ENCODE measurements at regions of chr5 and their contacts with region 1.

Region 1: GRCh38 chr5:43120720-43121564 is at the start of gene ZNF131:
- DNase-seq: peak; percentile 95 to 99 (median 98)
- ATAC-seq: peak; percentile 93
- H3K4me3 ChIP-seq: peak within 1 kb of the TSS; percentile 70
- H3K4me3 Mint-ChIP-seq: peak within 1 kb of the TSS; percentile 89 to 98 (median 96)
- H3K27ac ChIP-seq: peak within 1 kb of the TSS; percentile 97
- H3K27ac Mint-ChIP-seq: peak within 1 kb of the TSS; percentile 86 to 99 (median 96)
- H3K4me1 ChIP-seq: peaks cover 27 to 30% of the 10 kb centered on the region in 2 donors
- H3K4me1 Mint-ChIP-seq: peaks cover 22 to 47% (median 44%) of the 10 kb centered on the region in 7 donors
- H3K27me3 ChIP-seq: no peaks in the 10 kb centered on the region
- H3K27me3 Mint-ChIP-seq: peaks cover 0 to 4% (median 0%) of the 10 kb centered on the region in 5 donors
- total RNA-seq, gene ZNF131: 47.2 to 83.4 (median 67.8) TPM

Region 2: DNA sequence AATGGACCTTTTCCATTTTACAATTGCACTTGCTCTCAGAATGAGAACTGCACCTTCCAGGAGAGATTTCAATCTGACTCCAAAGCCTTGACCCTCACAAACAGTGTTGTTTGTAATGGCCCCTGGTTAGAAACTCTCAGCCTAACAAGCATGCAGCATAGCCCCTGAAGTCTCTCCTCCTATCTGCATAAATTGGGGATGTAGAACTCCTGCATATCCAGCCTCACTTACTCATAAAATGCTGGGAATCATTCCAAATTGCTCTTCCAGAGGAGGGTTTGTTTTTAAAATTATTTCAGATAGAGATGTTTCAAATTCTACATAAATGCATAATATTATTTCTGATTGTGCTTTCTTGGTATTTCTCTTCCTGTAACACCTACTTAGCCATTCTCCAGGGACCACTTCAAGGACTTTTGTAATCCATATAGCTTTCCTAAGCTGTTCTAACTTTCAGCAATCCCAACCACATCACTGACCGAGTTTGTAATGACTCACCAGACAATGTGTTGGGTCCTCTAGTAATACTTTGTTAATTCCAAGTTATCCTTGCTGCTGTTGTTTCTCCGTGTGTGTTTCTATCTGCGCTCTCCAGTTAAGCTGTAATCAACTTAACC is 508.1 kb before region 1 on chr5:
- CTCF ChIA-PET with region 1: no interaction called
- POLR2A ChIA-PET with region 1: no interaction called
- intact Hi-C with region 1: no loop called
- DNase-seq: no peak
- ATAC-seq: no peak
- H3K4me3 ChIP-seq: no peak overlapping the region
- H3K4me3 Mint-ChIP-seq: no peak overlapping the region
- H3K27ac ChIP-seq: no peak overlapping the region
- H3K27ac Mint-ChIP-seq: no peak overlapping the region
- H3K4me1 ChIP-seq: no peaks in the 10 kb centered on the region
- H3K4me1 Mint-ChIP-seq: no peaks in the 10 kb centered on the region
- H3K27me3 ChIP-seq: peaks cover 0 to 3% of the 10 kb centered on the region in 2 donors
- H3K27me3 Mint-ChIP-seq: peaks cover 22 to 50% (median 29%) of the 10 kb centered on the region in 5 donors

Region 3: GRCh38 chr5:42908509-42909488 is 212.1 kb before region 1 on chr5:
- CTCF ChIA-PET with region 1: interaction called, 7 read pairs
- POLR2A ChIA-PET with region 1: interaction called, 25 read pairs
- intact Hi-C with region 1: loop called (anchors 1 to 2 kb)
- DNase-seq: peak; percentile 76 to 93 (median 88)
- ATAC-seq: peak; percentile 92
- H3K4me3 ChIP-seq: peak overlapping the region; percentile 72
- H3K4me3 Mint-ChIP-seq: peak overlapping the region; percentile 89 to 98 (median 94)
- H3K27ac ChIP-seq: peak overlapping the region; percentile 76
- H3K27ac Mint-ChIP-seq: peak overlapping the region; percentile 64 to 97 (median 95)
- H3K4me1 ChIP-seq: peaks cover 0 to 4% of the 10 kb centered on the region in 2 donors
- H3K4me1 Mint-ChIP-seq: peaks cover 5 to 22% (median 19%) of the 10 kb centered on the region in 7 donors
- H3K27me3 ChIP-seq: no peaks in the 10 kb centered on the region
- H3K27me3 Mint-ChIP-seq: peaks cover 0 to 43% (median 0%) of the 10 kb centered on the region in 5 donors

Region 4: DNA sequence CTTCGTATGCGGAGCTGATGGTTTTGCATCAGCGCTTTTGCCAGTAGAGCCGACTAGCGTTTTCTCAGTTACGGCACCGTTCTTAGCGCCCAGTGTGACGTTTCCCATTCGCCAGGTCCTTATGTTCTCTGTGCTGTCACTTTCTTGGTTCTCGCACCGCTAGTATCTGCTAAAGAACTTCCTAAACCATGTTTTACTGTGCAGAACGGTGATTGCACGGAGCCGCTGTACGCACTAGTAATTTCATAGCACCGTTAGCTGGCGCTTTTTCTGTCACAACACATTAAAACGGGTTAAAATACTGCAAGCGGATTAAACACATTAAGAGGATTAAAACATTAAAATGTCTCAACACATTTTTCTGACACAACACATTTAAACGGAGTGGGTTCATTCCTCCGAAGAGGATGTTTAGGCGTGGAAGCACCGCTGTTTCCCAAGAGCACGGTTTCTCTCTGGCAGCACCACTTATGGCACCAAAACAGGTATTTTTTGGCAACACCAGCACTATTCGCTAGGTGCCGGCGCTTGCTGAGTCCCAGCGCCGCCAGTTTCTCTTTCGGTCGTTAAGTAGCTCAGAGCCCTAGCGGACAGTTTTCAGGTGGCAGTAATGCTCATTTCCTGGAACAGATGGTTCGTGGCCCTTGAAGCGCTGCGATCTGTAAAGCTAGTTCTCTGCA is 101.2 kb before region 1 on chr5:
- CTCF ChIA-PET with region 1: interaction called, 6 read pairs
- POLR2A ChIA-PET with region 1: interaction called, 76 read pairs
- intact Hi-C with region 1: loop called (anchors 1 to 2 kb)
- DNase-seq: peak; percentile 63 to 94 (median 88)
- ATAC-seq: peak; percentile 77
- H3K4me3 ChIP-seq: peak overlapping the region; percentile 76
- H3K4me3 Mint-ChIP-seq: peak overlapping the region; percentile 92 to 99 (median 98)
- H3K27ac ChIP-seq: peak overlapping the region; percentile 96
- H3K27ac Mint-ChIP-seq: peak overlapping the region; percentile 96 to 100 (median 99)
- H3K4me1 ChIP-seq: peaks cover 34 to 35% of the 10 kb centered on the region in 2 donors
- H3K4me1 Mint-ChIP-seq: peaks cover 20 to 52% (median 46%) of the 10 kb centered on the region in 7 donors
- H3K27me3 ChIP-seq: no peaks in the 10 kb centered on the region
- H3K27me3 Mint-ChIP-seq: no peaks in the 10 kb centered on the region

Region 5: DNA sequence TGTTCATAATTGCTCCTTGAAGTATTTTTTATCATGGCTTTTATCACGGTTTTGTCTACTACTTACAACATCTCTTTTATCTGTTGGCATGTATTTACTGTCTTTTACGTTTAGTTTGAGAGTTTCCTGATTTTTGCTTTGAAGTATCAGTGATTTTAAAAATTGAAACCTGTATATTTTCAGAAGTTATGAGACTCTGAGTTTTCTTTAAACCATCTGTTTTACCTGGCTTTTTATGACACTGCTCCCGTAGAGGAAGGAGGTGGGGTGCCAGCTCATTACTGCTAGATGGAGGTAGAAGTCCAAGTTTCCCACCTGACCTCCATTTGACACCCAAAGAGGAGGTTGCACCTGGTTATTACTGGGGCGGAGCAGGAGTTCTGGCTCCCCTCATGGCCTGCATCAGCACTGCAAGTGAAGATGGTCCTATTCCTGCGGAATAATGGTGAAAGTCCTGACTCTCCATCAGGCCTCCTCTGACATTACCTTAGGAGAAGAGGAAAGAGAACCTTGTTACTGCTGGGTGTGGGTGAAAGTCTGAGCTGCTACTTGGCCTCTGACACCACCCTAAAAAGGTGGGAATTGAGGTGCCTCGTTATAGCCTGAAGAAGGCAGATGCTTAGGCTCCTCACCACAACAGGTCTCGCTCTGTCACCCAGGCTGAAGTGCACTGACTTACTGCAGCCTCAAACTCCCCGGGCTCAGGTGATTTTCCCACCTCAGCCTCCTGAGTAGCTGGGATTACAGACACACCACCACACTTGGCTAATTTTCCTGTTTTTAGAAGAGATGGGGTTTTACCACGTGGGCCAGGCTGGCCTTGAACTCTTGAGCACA is 10.1 kb before region 1 on chr5:
- CTCF ChIA-PET with region 1: interaction called, 42 read pairs
- POLR2A ChIA-PET with region 1: interaction called, 210 read pairs
- intact Hi-C with region 1: loop called in 1 of 2 experiments (anchors 1 kb)
- DNase-seq: peak in 7 of 9 donors; percentile 44 to 59 (median 51)
- ATAC-seq: peak; percentile 87
- H3K4me3 ChIP-seq: no peak overlapping the region
- H3K4me3 Mint-ChIP-seq: peak overlapping the region; percentile 37 to 86 (median 60)
- H3K27ac ChIP-seq: peak overlapping the region; percentile 54
- H3K27ac Mint-ChIP-seq: peak overlapping the region; percentile 66 to 97 (median 89)
- H3K4me1 ChIP-seq: peaks cover 0 to 28% of the 10 kb centered on the region in 2 donors
- H3K4me1 Mint-ChIP-seq: peaks cover 13 to 35% (median 28%) of the 10 kb centered on the region in 7 donors
- H3K27me3 ChIP-seq: no peaks in the 10 kb centered on the region
- H3K27me3 Mint-ChIP-seq: no peaks in the 10 kb centered on the region

Region 6: DNA sequence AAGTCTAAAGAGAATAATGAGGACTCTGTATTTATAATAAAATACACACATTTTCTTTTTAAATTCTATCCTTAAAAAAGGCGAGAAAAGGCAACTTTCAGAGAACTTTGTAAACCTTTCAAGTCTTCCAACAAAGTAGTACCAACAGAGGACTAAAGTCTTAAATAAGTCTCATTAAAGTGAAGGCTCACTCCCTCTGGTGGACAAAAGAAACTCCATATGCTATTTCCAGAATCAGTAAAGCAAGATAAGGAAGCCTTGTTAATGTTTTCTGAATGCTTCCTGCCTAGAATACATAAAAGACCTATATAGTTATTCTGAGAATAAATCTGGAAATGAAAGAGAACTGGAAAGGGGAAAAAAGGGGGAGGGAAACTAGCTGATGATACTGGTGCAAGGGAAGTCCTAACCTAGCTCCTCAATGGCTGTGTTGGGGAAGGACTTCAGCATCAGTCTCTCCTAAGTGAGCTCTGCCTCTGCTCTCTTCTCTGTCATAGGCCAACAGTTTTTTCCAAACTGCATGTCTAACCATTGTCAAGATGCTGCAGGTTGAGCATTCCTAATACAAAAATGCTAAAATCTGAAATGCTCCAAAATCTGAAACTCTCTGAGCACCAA is 185.1 kb after region 1 on chr5:
- CTCF ChIA-PET with region 1: interaction called, 3 read pairs
- POLR2A ChIA-PET with region 1: interaction called, 4 read pairs
- intact Hi-C with region 1: loop called in 1 of 2 experiments (anchors 2 kb)
- DNase-seq: peak in 7 of 9 donors; percentile 24 to 64 (median 50)
- ATAC-seq: peak; percentile 79
- H3K4me3 ChIP-seq: no peak overlapping the region
- H3K4me3 Mint-ChIP-seq: peak overlapping the region in 1 of 10 donors; percentile 18
- H3K27ac ChIP-seq: no peak overlapping the region
- H3K27ac Mint-ChIP-seq: peak overlapping the region in 6 of 9 donors; percentile 4 to 86 (median 30)
- H3K4me1 ChIP-seq: peaks cover 0 to 10% of the 10 kb centered on the region in 2 donors
- H3K4me1 Mint-ChIP-seq: peaks cover 21 to 82% (median 52%) of the 10 kb centered on the region in 7 donors
- H3K27me3 ChIP-seq: no peaks in the 10 kb centered on the region
- H3K27me3 Mint-ChIP-seq: no peaks in the 10 kb centered on the region

Region 7: DNA sequence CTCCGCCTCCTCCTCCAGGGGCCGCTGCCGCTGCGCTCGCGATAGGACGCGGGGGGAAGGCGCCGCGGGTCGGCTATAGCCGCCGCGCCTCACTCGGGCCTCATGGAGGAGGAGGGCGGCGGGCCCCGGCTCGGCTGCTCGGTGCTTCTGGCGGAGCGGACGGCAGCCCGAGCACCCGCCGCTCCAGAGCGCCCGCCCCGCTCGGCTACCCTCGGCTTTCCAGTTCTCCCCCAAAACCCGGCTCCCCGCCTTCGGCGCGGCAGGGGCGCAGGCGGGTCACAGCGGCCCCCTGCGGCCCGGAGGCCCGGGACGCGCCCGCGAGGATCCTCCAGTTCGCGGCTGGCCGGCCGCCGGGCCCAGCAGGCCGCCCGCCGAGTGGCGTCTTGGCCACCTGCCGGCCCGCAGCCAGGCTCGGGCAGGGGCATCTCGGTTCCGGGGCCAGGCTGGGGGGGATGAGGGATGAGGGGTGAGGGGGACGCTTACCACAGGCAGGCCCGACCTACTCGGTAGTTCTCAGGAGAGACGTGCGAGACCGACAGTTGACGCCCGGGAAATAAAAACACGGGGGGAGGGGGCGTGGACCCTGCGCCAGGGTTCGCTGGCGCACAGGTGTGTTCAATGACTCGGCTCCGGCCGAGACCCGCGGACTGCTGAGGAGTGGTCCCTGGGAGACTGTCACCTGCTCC is 436.1 kb after region 1 on chr5 and contains the start of gene PAIP1:
- CTCF ChIA-PET with region 1: no interaction called
- POLR2A ChIA-PET with region 1: interaction called, 7 read pairs
- intact Hi-C with region 1: loop called (anchors 1 kb)
- DNase-seq: peak; percentile 80 to 89 (median 87)
- ATAC-seq: peak; percentile 89
- H3K4me3 ChIP-seq: peak within 1 kb of the TSS; percentile 79
- H3K4me3 Mint-ChIP-seq: peak within 1 kb of the TSS in 7 of 10 donors; percentile 88 to 97 (median 95)
- H3K27ac ChIP-seq: peak within 1 kb of the TSS; percentile 96
- H3K27ac Mint-ChIP-seq: peak within 1 kb of the TSS; percentile 91 to 99 (median 98)
- H3K4me1 ChIP-seq: peaks cover 17 to 30% of the 10 kb centered on the region in 2 donors
- H3K4me1 Mint-ChIP-seq: peaks cover 6 to 17% (median 7%) of the 10 kb centered on the region in 7 donors
- H3K27me3 ChIP-seq: no peaks in the 10 kb centered on the region
- H3K27me3 Mint-ChIP-seq: peaks cover 0 to 18% (median 5%) of the 10 kb centered on the region in 5 donors
- total RNA-seq, gene PAIP1: 20.7 to 41.7 (median 39.2) TPM

Measured in naive thymus-derived CD4-positive, alpha-beta T cell (primary cell).